ENCODE measurements at regions of chr6 and their contacts with region 1.

Region 1: DNA sequence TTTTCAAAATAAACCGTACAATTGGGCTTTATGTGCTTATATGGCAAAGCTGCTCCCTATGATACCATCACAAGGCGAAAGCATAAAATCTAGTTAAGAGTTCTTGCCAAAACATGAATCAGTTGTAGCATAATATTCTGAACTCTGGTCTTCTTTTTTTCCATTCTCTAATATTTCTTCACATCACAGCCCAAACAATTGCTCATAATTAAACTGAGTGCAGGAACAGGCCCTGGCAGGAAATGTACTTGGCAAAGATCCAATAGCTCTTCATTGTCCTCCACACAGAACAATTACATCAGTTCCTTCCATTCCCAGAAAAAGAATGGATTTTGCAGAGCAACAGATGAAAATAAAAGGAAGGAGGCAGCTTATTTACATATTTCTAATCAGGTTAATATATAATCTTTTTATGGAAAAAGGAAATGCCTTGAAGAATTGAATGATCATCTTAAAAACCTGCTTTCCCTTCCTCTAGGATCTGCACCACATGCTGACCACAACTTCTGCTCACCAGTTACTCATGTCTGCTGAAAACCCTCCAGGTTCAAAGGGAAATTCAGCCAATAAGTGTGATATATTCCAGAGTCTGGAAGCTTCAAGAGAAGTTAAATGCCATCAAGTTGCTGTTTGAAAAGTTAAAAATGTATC is 123.3 kb upstream of the COL21A1 start:
- DNase-seq: peak in 1 of 2 donors; percentile 74
- ATAC-seq: peak; percentile 74 to 90 (median 84)
- H3K4me3 ChIP-seq: peak overlapping the region in 1 of 10 donors; percentile 20
- H3K27ac ChIP-seq: peak overlapping the region; percentile 21 to 88 (median 79)
- H3K4me1 ChIP-seq: peaks cover 13 to 91% (median 66%) of the 10 kb centered on the region in 9 donors
- H3K27me3 ChIP-seq: no peaks in the 10 kb centered on the region
- CTCF ChIP-seq: no peak

Region 2: GRCh38 chr6:56451165-56451739 is 80.6 kb after region 1 on chr6:
- intact Hi-C with region 1: loop called in 4 of 10 experiments (anchors 1 to 10 kb)
- DNase-seq: peak; percentile 70 to 83
- ATAC-seq: peak; percentile 78 to 90 (median 84)
- H3K4me3 ChIP-seq: no peak overlapping the region
- H3K27ac ChIP-seq: peak overlapping the region in 9 of 10 donors; percentile 18 to 83 (median 68)
- H3K4me1 ChIP-seq: peaks cover 0 to 32% (median 21%) of the 10 kb centered on the region in 9 donors
- H3K27me3 ChIP-seq: no peaks in the 10 kb centered on the region
- CTCF ChIP-seq: no peak

Region 3: DNA sequence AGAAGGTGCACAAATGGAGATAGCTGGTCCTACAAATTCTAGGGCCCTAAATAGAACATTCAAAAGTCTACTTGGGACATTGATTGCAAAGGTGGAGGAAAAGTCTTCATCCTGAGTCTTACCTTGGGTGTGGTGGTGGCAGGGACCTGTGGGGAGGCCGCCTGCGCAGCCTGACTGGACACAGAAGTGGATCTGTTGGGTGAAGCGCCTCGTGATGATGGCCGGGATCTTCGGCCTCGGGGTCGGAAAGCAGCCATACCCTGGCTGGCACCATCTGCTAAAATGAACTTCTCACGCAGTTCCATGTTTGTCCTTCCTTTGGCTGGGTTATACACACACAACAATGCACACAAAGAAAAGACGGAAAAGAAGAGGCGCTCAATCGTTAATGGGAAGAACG is 92.8 kb after region 1 on chr6:
- intact Hi-C with region 1: loop called in 3 of 10 experiments (anchors 5 to 10 kb)
- DNase-seq: no peak
- ATAC-seq: no peak
- H3K4me3 ChIP-seq: no peak overlapping the region
- H3K27ac ChIP-seq: no peak overlapping the region
- H3K4me1 ChIP-seq: no peaks in the 10 kb centered on the region
- H3K27me3 ChIP-seq: no peaks in the 10 kb centered on the region
- CTCF ChIP-seq: no peak

Region 4: DNA sequence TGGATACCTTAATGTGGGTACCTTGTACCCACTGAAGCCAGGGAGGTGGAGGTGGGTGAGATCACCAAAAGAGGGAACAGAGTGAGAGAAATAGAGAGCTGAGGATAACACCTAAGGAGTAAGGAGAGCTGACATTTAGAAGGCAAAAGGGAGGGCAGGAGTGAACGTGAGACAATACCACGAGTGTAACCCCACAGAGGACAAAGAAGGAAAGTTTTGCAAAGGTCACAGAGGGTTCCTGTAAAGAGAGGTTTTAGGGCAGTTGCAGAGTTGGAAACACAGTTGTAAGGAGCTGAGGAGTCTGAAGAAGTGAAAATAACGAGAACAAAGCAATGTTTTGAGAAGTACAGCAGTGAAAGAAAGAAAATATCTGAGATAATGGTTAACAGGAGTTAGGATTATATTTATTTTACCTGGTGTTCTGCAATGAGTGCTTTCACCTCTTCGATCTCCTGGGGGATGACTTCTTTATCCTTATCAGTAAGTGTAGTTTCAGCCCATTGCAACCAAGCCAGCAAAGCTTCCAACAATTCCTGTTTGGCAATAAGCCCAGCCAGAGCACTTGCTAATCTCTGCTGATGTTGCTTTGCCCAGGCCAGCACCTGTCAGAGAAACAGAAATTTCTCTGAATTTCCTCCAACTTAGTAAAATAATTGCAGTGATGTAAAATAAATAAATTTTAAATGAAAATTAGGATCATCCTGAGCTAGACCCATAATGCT is 105.2 kb after region 1 on chr6:
- intact Hi-C with region 1: loop called in 1 of 10 experiments (anchors 5 kb)
- DNase-seq: peak in 1 of 2 donors; percentile 69
- ATAC-seq: peak in 7 of 8 donors; percentile 70 to 92 (median 86)
- H3K4me3 ChIP-seq: no peak overlapping the region
- H3K27ac ChIP-seq: peak overlapping the region in 3 of 10 donors; percentile 28 to 57 (median 49)
- H3K4me1 ChIP-seq: peaks cover 0 to 27% (median 17%) of the 10 kb centered on the region in 9 donors
- H3K27me3 ChIP-seq: no peaks in the 10 kb centered on the region
- CTCF ChIP-seq: no peak

Region 5: GRCh38 chr6:56542364-56543331 is 172.0 kb after region 1 on chr6:
- intact Hi-C with region 1: loop called in 2 of 10 experiments (anchors 5 kb)
- DNase-seq: peak; percentile 88 to 93
- ATAC-seq: peak; percentile 93 to 98 (median 95)
- H3K4me3 ChIP-seq: peak overlapping the region; percentile 27 to 73 (median 62)
- H3K27ac ChIP-seq: peak overlapping the region; percentile 77 to 93 (median 92)
- H3K4me1 ChIP-seq: peaks cover 2 to 69% (median 54%) of the 10 kb centered on the region in 9 donors
- H3K27me3 ChIP-seq: no peaks in the 10 kb centered on the region
- CTCF ChIP-seq: peak in 7 of 9 donors; percentile 10 to 74 (median 46)

Region 6: DNA sequence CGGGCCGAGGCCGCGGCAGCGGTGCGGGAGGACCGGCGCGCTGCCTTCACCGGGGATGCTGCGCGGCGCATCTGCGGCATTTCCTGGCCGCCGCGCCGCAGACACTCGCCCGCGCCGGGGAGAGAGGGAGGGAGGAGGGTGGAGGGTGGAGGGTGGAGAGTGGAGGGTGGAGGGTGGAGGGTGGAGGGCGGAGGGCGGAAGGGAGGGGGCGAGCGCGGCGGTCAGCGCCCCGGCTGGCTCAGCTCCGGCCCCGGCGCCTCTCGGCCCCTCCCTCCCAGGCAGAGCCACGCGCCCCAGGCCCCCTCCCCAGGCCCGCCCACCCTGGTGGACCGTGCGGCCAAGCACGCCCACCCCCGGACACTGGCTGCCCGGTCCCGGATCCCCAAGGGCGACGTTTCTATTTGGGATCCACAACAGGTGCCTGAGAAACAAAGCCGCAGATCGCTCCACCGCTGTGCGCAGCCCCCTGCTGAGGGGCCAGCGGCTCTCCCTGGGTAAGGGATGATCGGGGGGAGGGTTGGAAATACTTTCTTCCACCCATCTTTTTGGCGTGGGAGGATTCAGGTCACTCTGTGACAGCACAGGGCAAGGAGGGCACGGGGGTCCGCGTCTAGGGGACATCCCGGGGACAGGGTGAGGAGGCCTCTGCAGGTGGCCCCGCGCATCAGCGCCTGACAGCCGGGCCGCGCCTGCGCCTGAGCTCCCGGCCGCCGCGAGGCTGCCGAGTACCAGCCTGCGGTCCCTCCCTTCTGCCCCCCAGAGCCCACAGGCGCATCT is 473.1 kb after region 1 on chr6:
- intact Hi-C with region 1: loop called in 1 of 10 experiments (anchors 10 kb)
- DNase-seq: peak; percentile 67 to 78
- ATAC-seq: peak; percentile 85 to 96 (median 92)
- H3K4me3 ChIP-seq: peak overlapping the region; percentile 52 to 77 (median 70)
- H3K27ac ChIP-seq: peak overlapping the region; percentile 80 to 96 (median 91)
- H3K4me1 ChIP-seq: peaks cover 0 to 60% (median 32%) of the 10 kb centered on the region in 9 donors
- H3K27me3 ChIP-seq: peaks cover 0 to 13% (median 0%) of the 10 kb centered on the region in 7 donors
- CTCF ChIP-seq: peak; percentile 37 to 79 (median 63)